PC-3 (cell line): ENCODE measurements at regions of chr2 and their contacts with region 1.

Region 1: DNA sequence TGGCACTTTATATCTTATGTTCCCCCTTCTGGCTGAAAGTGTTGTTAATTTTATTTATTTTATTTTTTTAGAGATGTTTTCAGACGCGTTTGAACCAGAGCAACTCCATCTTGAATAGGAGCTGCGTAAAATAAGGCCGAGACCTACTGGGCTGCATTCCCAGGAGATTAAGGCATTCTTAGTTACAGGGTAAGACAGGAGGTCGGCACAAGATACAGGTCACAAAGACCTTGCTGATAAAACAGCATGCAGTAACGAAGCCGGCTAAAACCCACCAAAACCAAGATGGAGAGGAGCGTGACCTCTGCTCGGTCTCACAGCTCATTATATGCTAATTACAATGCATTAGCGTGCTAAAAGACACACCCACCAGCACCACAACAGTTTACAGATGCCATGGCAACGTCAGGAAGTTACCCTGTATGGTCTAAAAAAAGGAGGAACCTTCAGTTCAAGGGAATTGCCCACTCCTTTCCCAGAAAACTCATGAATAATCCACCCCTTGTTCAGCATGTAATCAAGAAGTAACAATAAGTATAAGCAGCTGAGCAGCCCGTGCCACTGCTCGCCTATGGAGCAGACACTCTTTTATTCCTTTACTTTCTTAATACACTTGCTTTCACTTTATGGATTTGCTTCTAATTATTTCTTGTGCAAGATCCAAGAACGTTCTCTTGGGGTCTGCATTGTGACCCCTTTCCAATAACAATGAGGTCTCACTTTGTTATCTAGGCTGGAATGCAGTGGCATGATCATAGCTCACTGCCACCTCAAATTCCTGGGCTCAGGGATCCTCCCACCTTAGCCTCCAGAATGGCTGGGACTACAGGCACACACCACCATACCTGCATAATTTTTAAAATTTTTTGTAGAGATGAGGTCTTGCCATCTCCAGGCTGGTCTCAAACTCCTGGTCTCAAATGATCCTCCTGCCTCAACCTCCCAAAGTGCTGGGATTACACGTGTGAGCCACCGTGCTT is 55.9 kb downstream of the CACNB4 start:
- DNase-seq: no peak
- ATAC-seq: no peak
- H3K4me3 ChIP-seq: no peak overlapping the region
- H3K27ac ChIP-seq: no peak overlapping the region
- H3K4me1 ChIP-seq: no peaks in the 10 kb centered on the region
- H3K27me3 ChIP-seq: 0 out of 2 replicates have a peak, but pooled peaks cover 7% of the 10 kb centered on the region
- CTCF ChIP-seq: no peak

Region 2: GRCh38 chr2:152161598-152161997 is 118.7 kb after region 1 on chr2:
- CTCF ChIA-PET with region 1: no interaction called
- POLR2A ChIA-PET with region 1: no interaction called
- intact Hi-C with region 1: no loop called
- DNase-seq: no peak
- ATAC-seq: no peak
- H3K4me3 ChIP-seq: no peak overlapping the region
- H3K27ac ChIP-seq: no peak overlapping the region
- H3K4me1 ChIP-seq: peaks cover 2% of the 10 kb centered on the region; the same call in 1 of the 2 replicates
- H3K27me3 ChIP-seq: no peaks in the 10 kb centered on the region
- CTCF ChIP-seq: no peak

Region 3: DNA sequence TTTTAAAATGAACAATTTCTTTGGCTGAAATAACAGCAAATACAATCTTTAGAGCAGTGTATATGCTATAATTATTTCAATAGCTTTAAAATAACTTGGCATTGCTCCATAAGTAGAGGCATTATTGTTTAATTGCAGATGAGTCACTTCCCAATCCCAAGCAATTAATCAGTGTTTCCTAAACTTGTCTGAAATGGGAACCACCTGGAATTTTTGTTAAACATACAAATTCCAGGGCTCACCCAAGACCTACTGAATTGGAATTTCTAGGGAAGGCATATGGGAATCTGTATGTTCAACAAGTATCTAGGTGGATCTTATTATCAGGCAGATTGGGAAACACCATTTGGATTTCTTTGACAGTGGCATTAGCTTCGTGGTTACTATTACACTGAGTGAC is 264.9 kb after region 1 on chr2:
- CTCF ChIA-PET with region 1: no interaction called
- POLR2A ChIA-PET with region 1: interaction called, 23 read pairs
- intact Hi-C with region 1: no loop called
- DNase-seq: peak; percentile 12
- ATAC-seq: peak; percentile 7; the same call in 1 of the 2 replicates
- H3K4me3 ChIP-seq: no peak overlapping the region
- H3K27ac ChIP-seq: no peak overlapping the region
- H3K4me1 ChIP-seq: peaks cover 24% of the 10 kb centered on the region
- H3K27me3 ChIP-seq: no peaks in the 10 kb centered on the region
- CTCF ChIP-seq: no peak